ENCODE measurements at regions of chr12 and their contacts with region 1.

Region 1: GRCh38 chr12:91178139-91178561 is 4.5 kb downstream of the DCN start:
- DNase-seq: no peak
- H3K4me3 ChIP-seq: peak overlapping the region; percentile 53
- H3K27ac ChIP-seq: no peak overlapping the region
- H3K27me3 ChIP-seq: no peaks in the 10 kb centered on the region
- CTCF ChIP-seq: peak; percentile 66

Region 2: DNA sequence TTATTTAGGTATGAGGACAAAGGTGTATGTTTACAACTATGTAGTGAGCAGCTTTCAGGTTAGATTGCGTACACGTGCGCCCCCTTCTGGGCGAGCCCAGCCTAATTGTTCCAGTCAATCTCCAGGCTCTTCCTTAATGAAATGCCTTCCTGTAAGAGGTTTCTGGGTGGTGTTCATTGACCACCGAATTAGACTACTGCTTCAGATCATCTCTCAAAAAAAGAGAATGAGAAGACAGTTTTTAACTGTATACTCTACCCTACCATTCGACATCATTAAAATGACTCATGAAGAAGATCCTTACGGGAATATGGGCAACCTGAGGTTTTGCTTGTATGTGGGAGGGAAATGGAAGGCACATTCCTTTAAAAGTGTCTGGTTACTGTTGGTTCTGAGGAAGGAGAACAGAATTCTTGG is 69.0 kb before region 1 on chr12:
- CTCF ChIA-PET with region 1: interaction called, 15 read pairs
- POLR2A ChIA-PET with region 1: interaction called, 6 read pairs
- DNase-seq: no peak
- H3K4me3 ChIP-seq: peak overlapping the region; percentile 56
- H3K27ac ChIP-seq: no peak overlapping the region
- H3K27me3 ChIP-seq: no peaks in the 10 kb centered on the region
- CTCF ChIP-seq: peak; percentile 71

Region 3: DNA sequence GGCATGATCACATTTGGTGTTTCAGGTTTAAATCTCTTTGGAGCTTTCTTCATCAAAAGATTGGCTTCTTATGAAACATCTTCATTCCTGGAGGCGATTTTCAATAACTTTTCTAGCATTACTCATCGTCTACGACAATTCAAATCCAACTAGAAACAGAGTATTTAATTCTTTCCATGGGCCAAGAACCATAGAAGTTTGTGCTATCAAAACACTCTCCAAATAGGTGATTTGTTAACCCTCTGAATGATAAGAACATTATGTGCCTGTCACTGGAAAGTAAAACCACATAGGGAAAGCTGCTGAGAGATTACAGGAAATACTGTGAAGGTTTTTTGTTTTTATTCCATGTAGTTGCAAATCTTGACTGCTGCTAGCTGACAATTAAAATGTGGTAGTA is 11.4 kb after region 1 on chr12:
- CTCF ChIA-PET with region 1: interaction called, 12 read pairs
- POLR2A ChIA-PET with region 1: no interaction called
- DNase-seq: no peak
- H3K4me3 ChIP-seq: no peak overlapping the region
- H3K27ac ChIP-seq: no peak overlapping the region
- H3K27me3 ChIP-seq: no peaks in the 10 kb centered on the region
- CTCF ChIP-seq: no peak

Region 4: GRCh38 chr12:91326058-91327027 is 148.2 kb after region 1 on chr12:
- CTCF ChIA-PET with region 1: interaction called, 82 read pairs
- POLR2A ChIA-PET with region 1: interaction called, 38 read pairs
- DNase-seq: peak; percentile 55
- H3K4me3 ChIP-seq: no peak overlapping the region; the same call in 1 of the 2 replicates
- H3K27ac ChIP-seq: no peak overlapping the region
- H3K27me3 ChIP-seq: no peaks in the 10 kb centered on the region
- CTCF ChIP-seq: peak; percentile 91

Region 5: DNA sequence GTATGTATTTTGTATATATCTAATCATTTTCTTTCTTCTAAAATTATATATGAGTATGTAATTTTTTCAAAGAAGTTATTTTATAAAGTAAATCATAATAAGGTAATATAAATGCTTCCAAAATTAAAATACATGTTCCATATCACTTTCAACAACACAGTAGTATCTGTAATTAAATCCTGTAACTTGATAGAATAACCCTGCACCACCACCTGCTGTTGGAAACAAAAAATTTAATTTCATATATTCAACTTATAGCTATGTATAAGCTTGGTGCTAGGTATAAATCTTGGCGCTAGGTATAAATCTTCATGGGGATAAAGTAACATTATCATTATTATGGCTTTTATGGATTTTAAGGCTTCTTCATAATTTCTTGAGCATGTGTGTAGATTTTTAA is 154.2 kb after region 1 on chr12:
- CTCF ChIA-PET with region 1: interaction called, 82 read pairs
- POLR2A ChIA-PET with region 1: interaction called, 38 read pairs
- DNase-seq: no peak
- H3K4me3 ChIP-seq: no peak overlapping the region
- H3K27ac ChIP-seq: no peak overlapping the region
- H3K27me3 ChIP-seq: no peaks in the 10 kb centered on the region
- CTCF ChIP-seq: peak; percentile 35

Region 6: GRCh38 chr12:91355150-91356006 is 177.2 kb after region 1 on chr12:
- CTCF ChIA-PET with region 1: interaction called, 41 read pairs
- POLR2A ChIA-PET with region 1: no interaction called
- DNase-seq: peak; percentile 63
- H3K4me3 ChIP-seq: no peak overlapping the region
- H3K27ac ChIP-seq: no peak overlapping the region
- H3K27me3 ChIP-seq: no peaks in the 10 kb centered on the region
- CTCF ChIP-seq: peak; percentile 97

Measured in AG04450 (cell line).